ENCODE measurements at regions of chr12 and their contacts with region 1.

Region 1: GRCh38 chr12:109110988-109111495 is 5.3 kb upstream of the ACACB start:
- DNase-seq: no peak
- H3K4me3 Mint-ChIP-seq: peak overlapping the region; percentile 67
- H3K27ac Mint-ChIP-seq: peak overlapping the region; percentile 23
- H3K4me1 Mint-ChIP-seq: no peaks in the 10 kb centered on the region
- H3K27me3 Mint-ChIP-seq: no peaks in the 10 kb centered on the region
- CTCF ChIP-seq: no peak

Region 2: GRCh38 chr12:109121346-109121880 is 10.4 kb after region 1 on chr12:
- CTCF ChIA-PET with region 1: interaction called, 13 read pairs
- POLR2A ChIA-PET with region 1: no interaction called
- intact Hi-C with region 1: no loop called
- DNase-seq: no peak
- H3K4me3 Mint-ChIP-seq: no peak overlapping the region
- H3K27ac Mint-ChIP-seq: no peak overlapping the region
- H3K4me1 Mint-ChIP-seq: no peaks in the 10 kb centered on the region
- H3K27me3 Mint-ChIP-seq: no peaks in the 10 kb centered on the region
- CTCF ChIP-seq: no peak

Region 3: DNA sequence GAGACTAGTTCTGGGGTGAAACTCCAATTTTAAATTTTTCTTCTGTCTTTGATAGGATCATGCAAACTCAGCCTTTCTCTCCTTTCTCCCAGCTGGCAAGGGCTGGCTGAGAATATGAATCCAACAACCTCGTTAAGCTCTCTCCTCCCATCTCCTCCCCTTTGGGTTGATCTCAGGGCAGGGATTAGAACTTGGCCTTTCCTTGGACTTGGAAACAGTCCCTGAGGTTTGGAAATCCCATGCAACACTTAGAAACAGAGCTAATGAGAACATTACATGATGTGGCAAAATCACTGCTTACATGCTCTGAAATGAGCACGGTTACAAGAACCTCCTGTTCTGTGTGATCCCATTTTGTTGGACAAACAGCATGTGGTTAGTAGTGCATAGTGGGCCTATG is 36.9 kb after region 1 on chr12:
- CTCF ChIA-PET with region 1: interaction called, 24 read pairs
- POLR2A ChIA-PET with region 1: interaction called, 4 read pairs
- intact Hi-C with region 1: no loop called
- DNase-seq: no peak
- H3K4me3 Mint-ChIP-seq: no peak overlapping the region
- H3K27ac Mint-ChIP-seq: peak overlapping the region; percentile 4
- H3K4me1 Mint-ChIP-seq: peaks cover under 1% of the 10 kb centered on the region
- H3K27me3 Mint-ChIP-seq: no peaks in the 10 kb centered on the region
- CTCF ChIP-seq: no peak

Region 4: GRCh38 chr12:109264095-109264942 is 153.3 kb after region 1 on chr12:
- CTCF ChIA-PET with region 1: interaction called, 16 read pairs
- POLR2A ChIA-PET with region 1: no interaction called
- intact Hi-C with region 1: no loop called
- DNase-seq: peak; percentile 84
- H3K4me3 Mint-ChIP-seq: no peak overlapping the region
- H3K27ac Mint-ChIP-seq: no peak overlapping the region
- H3K4me1 Mint-ChIP-seq: peaks cover 8% of the 10 kb centered on the region
- H3K27me3 Mint-ChIP-seq: no peaks in the 10 kb centered on the region
- CTCF ChIP-seq: peak; percentile 85

Region 5: DNA sequence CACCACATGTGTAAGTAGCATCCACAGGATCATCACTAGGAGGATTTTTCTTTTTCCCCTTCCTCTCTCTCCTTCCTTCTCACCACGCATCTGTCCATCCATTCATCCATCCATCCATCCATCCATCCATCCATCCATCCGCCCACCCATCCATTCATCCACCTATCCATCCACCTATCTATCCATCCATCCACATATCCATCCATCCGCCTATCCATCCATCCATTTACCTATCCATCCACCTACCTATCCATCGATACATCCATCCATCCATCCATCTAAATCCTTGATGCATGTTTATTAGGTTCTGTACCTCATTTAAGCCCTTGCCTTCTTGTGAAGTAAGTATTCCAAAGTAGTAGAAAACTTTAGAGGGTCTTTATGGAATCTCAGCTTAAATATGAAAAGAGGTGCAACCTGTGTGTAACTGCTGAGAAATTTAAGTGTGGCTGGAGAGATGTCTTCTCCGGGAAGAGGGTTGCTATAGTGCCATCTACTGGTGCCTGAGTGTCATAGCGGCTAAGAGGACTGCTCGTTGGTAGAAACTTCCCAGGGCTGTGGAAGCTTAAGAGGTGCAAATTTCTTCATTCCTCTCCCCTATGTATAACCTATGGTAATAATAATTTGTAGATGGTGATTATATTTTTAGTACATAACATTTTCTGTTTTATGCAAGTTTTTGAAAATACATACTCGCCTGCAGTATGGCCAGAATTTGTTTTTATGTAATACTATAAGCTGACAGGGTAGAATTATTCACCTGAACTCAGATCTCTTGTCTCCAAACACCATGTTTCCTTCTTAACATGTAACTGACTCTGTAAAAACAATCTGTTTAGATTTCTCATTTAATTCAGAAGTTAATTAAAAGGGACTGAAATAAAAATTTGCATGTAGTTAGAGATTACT is 282.6 kb after region 1 on chr12:
- CTCF ChIA-PET with region 1: interaction called, 19 read pairs
- POLR2A ChIA-PET with region 1: interaction called, 3 read pairs
- intact Hi-C with region 1: loop called (anchors 2 kb)
- DNase-seq: peak; percentile 68
- H3K4me3 Mint-ChIP-seq: no peak overlapping the region
- H3K27ac Mint-ChIP-seq: no peak overlapping the region
- H3K4me1 Mint-ChIP-seq: no peaks in the 10 kb centered on the region
- H3K27me3 Mint-ChIP-seq: peaks cover 51% of the 10 kb centered on the region
- CTCF ChIP-seq: peak; percentile 90